OCI-LY7 (cell line): ENCODE measurements at regions of chr17 and their contacts with region 1.

Region 1: DNA sequence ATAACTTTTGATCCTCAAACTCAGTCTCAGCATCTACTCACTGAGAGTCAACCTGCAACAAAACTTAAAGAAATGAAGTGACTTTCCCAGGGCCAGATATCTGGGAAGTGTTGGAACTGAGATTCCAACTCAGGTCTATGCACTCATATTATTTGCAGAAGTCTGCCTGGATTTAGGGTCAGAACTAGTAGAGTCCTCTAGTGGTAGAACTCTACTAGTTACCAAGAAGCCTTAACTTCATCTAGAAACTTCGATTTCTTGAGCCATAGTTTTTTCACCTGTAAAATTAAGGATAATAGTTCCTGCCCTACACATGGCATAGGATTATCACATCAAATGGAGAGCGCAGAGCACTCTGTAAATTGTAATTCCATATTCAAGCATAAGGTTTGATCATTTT is 23.4 kb upstream of the KRT24 start:
- DNase-seq: peak; percentile 9
- H3K4me3 ChIP-seq: no peak overlapping the region
- H3K27ac ChIP-seq: no peak overlapping the region
- H3K4me1 ChIP-seq: peaks cover 8% of the 10 kb centered on the region
- CTCF ChIP-seq: peak; percentile 63

Region 2: GRCh38 chr17:40622509-40622928 is 104.4 kb before region 1 on chr17:
- CTCF ChIA-PET with region 1: no interaction called
- POLR2A ChIA-PET with region 1: no interaction called
- intact Hi-C with region 1: loop called (anchors 5 kb)
- DNase-seq: no peak
- H3K4me3 ChIP-seq: no peak overlapping the region
- H3K27ac ChIP-seq: no peak overlapping the region
- H3K4me1 ChIP-seq: peaks cover 41% of the 10 kb centered on the region
- CTCF ChIP-seq: no peak

Region 3: DNA sequence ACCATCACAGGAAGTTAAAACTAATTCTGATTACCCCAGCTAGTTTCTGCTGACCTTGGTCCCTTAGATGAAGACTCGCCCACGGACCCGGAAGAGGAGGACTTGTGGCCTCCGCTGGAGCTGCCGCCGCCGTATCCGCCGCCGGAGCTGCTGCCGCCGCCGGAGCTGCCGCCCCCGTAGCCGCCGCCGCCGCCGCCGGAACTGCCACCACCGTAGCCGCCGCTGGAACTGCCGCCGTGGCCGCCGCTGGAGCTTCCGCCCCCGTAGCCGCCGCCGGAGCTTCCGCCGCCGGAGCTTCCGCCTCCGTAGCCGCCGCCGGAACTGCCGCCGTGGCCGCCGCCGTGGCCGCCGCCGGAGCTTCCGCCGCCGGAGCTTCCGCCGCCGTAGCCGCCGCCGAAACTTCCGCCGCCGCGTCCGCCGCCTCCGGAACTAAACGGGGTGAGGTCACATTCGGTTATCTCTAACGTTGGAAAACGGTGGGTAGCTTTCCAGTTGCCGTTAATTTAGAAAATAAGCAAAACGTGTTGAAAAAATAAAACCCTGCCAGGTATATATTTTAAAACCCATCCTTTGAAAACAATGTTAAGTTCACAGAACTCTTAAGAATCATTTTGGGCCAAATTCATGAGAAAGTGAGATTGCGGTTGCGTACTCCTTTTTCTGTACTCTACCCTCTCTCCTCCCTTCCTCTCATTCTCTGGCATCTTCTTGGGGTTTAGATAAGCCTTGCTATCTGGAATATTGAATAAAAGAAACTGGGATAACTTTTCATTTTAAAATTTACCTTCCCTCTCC is 92.0 kb after region 1 on chr17:
- CTCF ChIA-PET with region 1: no interaction called
- POLR2A ChIA-PET with region 1: no interaction called
- intact Hi-C with region 1: no loop called
- DNase-seq: peak; percentile 84
- H3K4me3 ChIP-seq: peak overlapping the region; percentile 78
- H3K27ac ChIP-seq: peak overlapping the region; percentile 56
- H3K4me1 ChIP-seq: peaks cover 8% of the 10 kb centered on the region
- CTCF ChIP-seq: no peak